WTC11 (cell line): ENCODE measurements at regions of chr17 and their contacts with region 1.

Region 1: DNA sequence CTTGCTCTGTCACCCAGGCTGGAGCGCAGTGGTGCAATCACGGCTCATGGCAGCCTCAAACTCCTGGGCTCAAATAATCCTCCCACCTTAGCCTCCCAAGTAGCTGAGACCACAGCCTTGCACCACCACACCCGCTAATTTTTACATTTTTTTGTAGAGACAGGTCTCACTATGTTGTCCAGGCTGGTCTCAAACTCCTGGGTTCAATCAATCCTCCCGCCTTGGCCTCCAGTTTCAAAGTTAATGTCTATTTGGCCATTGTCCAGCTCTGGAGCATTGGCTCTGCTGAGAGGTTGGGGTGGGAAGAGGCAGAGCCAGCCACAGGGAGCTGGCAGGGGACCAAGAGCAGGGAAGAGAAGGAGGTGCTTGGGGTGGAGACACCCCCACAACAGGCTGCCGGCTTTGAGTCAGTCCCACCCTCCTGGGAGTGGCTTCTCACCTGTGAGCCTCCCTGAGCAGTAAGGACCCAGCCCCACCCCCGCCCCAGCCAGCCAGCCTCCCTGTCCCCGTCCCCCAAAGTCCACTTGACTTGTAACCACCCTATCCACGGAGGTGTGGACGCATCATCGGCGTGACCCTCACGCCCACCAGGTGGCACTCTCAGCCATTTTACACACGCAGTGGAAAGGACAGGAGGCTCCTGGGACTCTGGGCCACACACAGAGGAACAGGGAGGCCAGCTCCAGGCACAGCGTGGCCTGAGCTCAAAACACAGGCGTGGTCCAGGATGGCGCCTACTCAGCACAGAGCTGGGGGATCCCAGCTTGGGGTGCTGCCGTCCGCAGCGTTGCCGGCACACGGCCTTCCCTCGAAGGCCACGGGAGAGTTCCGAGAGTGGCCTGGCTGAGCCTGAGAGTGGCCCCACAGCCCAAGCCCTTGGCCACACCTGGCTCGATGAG is 22.8 kb upstream of the PVALEF start:
- DNase-seq: peak; percentile 80
- ATAC-seq: peak; percentile 90
- H3K4me3 Mint-ChIP-seq: no peak overlapping the region
- H3K27ac Mint-ChIP-seq: peak overlapping the region; percentile 60; the same call in 1 of the 2 replicates
- H3K4me1 Mint-ChIP-seq: no peaks in the 10 kb centered on the region
- H3K27me3 Mint-ChIP-seq: no peaks in the 10 kb centered on the region
- CTCF ChIP-seq: no peak

Region 2: GRCh38 chr17:81018044-81018802 is 124.3 kb before region 1 on chr17:
- CTCF ChIA-PET with region 1: no interaction called
- POLR2A ChIA-PET with region 1: no interaction called
- DNase-seq: no peak
- ATAC-seq: no peak
- H3K4me3 Mint-ChIP-seq: no peak overlapping the region
- H3K27ac Mint-ChIP-seq: peak overlapping the region; percentile 48
- H3K4me1 Mint-ChIP-seq: peaks cover 15% of the 10 kb centered on the region
- H3K27me3 Mint-ChIP-seq: no peaks in the 10 kb centered on the region
- CTCF ChIP-seq: no peak

Region 3: GRCh38 chr17:81200695-81201580 is 58.4 kb after region 1 on chr17:
- CTCF ChIA-PET with region 1: interaction called, 11 read pairs
- POLR2A ChIA-PET with region 1: no interaction called
- DNase-seq: no peak
- ATAC-seq: peak; percentile 84
- H3K4me3 Mint-ChIP-seq: no peak overlapping the region
- H3K27ac Mint-ChIP-seq: no peak overlapping the region
- H3K4me1 Mint-ChIP-seq: no peaks in the 10 kb centered on the region
- H3K27me3 Mint-ChIP-seq: no peaks in the 10 kb centered on the region
- CTCF ChIP-seq: peak; percentile 61

Region 4: DNA sequence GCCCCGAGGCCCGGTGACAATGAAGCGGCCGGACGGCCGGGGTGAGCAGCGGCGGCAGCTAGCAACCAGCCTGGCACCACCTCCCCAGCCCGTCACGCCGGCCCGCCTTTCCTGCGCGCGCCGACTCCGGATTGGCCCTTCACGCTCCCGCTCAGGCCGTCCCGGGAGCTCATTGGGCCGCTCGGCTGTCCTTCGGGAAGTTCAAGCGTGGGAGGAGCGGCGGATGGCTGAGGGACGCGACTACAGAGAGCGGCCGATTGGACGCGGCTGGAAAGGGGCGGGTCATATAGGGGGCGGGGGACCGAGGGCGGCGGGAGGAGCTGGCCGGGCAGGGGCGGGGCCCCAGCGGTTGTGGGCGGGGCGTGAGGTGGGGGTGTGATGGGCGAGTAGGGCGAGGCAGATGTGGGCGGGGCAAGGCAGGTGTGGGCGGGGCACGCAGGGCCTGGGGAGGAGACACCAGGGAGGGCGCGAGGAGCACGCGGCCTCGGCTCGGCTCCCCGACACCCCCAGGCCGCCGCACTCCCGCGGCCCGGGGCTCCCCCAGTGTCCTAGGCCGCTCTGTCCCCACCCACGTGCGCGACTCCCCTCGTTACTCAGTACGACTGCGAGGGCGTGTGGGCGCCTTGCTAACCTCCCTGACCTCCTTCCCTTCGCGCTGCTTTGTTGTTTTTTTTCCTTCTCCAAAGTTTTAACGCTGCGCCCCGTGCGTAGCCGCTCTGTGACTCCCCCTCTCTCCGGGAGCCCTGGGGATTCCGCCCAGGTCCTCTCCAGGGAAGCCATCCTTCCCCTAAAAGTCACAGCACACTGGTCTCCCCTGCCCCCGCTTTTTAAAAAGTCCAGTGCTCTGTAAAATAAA is 80.6 kb after region 1 on chr17 and contains the start of gene CEP131:
- CTCF ChIA-PET with region 1: interaction called, 18 read pairs
- POLR2A ChIA-PET with region 1: no interaction called
- DNase-seq: peak; percentile 100
- ATAC-seq: peak; percentile 96
- H3K4me3 Mint-ChIP-seq: peak within 1 kb of the TSS; percentile 76
- H3K27ac Mint-ChIP-seq: peak within 1 kb of the TSS; percentile 23; the same call in 1 of the 2 replicates
- H3K4me1 Mint-ChIP-seq: peaks cover 17% of the 10 kb centered on the region
- H3K27me3 Mint-ChIP-seq: peaks cover 20% of the 10 kb centered on the region
- CTCF ChIP-seq: no peak
- total RNA-seq, gene CEP131: 32.4 to 35.2 TPM (median 34.3 TPM) in 3 replicates